MCF 10A (cell line): ENCODE measurements at regions of chr13 and their contacts with region 1.

Region 1: GRCh38 chr13:95494082-95494681 is 58.3 kb upstream of the CLDN10 start:
- DNase-seq: peak; percentile 93
- H3K4me3 Mint-ChIP-seq: no peak overlapping the region
- H3K27ac Mint-ChIP-seq: no peak overlapping the region
- H3K4me1 Mint-ChIP-seq: peaks cover 6% of the 10 kb centered on the region
- H3K27me3 Mint-ChIP-seq: no peaks in the 10 kb centered on the region
- CTCF ChIP-seq: peak; percentile 71

Region 2: DNA sequence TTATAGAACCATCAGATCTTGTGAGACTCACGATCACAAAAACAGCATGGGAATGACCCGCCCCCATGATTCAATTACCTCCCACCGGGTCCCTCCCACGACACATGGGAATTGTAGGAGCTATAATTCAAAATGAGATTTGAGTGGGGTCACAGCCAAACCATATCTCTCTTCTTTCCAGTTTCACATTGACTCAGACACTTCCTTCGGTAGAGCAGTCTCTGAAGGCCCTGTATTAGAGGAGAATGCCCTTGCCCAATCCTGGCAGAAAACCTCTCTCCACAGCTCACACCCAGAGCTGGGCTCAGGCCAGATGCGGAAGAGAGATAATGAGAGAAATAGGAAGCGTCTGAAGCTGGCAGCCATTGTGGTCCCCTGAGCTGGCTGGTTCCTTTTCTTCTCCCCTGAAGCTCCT is 14.0 kb before region 1 on chr13:
- CTCF ChIA-PET with region 1: interaction called, 10 read pairs
- POLR2A ChIA-PET with region 1: interaction called, 4 read pairs
- intact Hi-C with region 1: no loop called
- DNase-seq: peak; percentile 17
- H3K4me3 Mint-ChIP-seq: no peak overlapping the region
- H3K27ac Mint-ChIP-seq: no peak overlapping the region
- H3K4me1 Mint-ChIP-seq: peaks cover 23% of the 10 kb centered on the region
- H3K27me3 Mint-ChIP-seq: no peaks in the 10 kb centered on the region
- CTCF ChIP-seq: no peak

Region 3: DNA sequence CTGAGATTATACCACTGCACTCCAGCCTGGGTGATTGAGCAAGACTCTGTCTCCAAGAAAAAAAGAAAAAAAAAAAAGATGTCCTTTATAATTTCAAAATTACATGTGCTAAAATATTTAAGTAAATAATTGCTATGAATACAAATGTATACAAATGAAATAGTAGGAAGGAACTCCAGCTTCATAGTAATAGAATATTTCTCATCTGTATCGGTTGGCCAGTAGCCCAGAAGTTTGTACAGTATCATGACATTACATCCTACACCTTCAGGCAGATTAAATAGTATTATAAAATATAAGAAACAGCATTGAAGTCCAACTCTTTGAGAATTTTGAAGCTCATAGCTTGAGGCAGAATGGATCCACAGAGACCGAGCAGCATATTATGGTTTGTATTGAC is 21.8 kb after region 1 on chr13:
- CTCF ChIA-PET with region 1: interaction called, 36 read pairs
- POLR2A ChIA-PET with region 1: no interaction called
- intact Hi-C with region 1: no loop called
- DNase-seq: peak; percentile 83
- H3K4me3 Mint-ChIP-seq: no peak overlapping the region
- H3K27ac Mint-ChIP-seq: no peak overlapping the region
- H3K4me1 Mint-ChIP-seq: no peaks in the 10 kb centered on the region
- H3K27me3 Mint-ChIP-seq: no peaks in the 10 kb centered on the region
- CTCF ChIP-seq: no peak

Region 4: DNA sequence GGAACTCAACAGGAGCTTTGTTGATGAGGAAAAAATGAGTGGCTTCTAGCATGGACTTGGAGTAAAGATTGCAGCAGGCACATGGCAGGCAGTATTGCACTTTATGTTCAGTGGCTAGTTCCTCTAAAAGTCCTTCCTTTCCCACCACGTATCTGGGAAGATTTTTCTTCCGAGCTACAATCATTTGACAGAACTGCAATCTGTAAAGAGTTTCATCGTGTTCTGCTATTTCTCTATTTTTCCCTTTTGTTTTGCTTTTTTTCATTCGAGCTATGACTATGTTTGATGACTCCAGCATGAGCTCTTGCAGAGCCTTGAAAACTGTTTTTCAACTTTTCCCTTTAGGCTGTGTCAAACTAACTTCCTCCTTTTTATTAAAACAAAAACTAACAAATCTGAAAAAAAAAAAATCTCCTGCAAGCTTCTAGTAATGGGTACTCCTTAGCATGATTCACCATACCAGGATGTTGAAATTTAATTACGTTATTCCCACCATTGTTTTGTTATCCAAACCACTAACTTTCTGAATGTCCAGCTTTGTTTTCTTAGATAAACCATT is 70.6 kb after region 1 on chr13:
- CTCF ChIA-PET with region 1: interaction called, 14 read pairs
- POLR2A ChIA-PET with region 1: interaction called, 5 read pairs
- intact Hi-C with region 1: loop called (anchors 1 kb)
- DNase-seq: peak; percentile 92
- H3K4me3 Mint-ChIP-seq: peak overlapping the region; percentile 56
- H3K27ac Mint-ChIP-seq: peak overlapping the region; percentile 17
- H3K4me1 Mint-ChIP-seq: peaks cover 26% of the 10 kb centered on the region
- H3K27me3 Mint-ChIP-seq: no peaks in the 10 kb centered on the region
- CTCF ChIP-seq: no peak

Region 5: DNA sequence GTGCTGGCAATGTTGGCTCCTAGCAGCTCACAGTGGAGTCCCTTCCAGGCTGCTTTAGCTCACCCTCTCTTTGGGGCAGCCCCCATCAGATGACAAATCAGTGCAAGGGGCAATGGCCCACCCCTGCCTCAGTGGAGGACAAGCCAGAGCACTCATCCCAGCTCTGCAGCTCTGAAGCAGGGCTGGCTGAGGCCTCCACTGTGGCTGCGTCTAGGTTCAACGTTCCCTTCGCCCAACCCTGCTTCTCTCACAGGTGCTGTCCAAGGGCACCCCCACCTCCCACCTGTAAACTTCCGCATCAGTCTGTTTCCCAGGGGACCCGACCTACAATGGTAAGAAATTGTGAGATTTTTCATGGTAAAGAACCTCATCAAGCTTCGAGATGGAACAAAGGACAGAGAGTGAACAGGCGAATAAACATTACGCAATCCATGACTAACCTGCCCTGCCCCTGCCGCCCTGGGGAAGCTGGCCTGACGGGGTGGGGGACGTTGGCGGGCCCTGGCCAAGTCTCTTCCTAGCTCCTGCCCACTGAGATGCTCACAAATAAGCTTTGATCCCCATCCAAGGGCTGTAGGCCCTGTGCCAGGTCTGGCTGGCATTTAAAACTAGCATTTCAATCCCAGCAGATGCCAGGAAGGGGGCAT is 109.8 kb after region 1 on chr13:
- CTCF ChIA-PET with region 1: interaction called, 8 read pairs
- POLR2A ChIA-PET with region 1: no interaction called
- intact Hi-C with region 1: loop called (anchors 1 kb)
- DNase-seq: peak; percentile 97
- H3K4me3 Mint-ChIP-seq: peak overlapping the region; percentile 26
- H3K27ac Mint-ChIP-seq: peak overlapping the region; percentile 85
- H3K4me1 Mint-ChIP-seq: peaks cover 56% of the 10 kb centered on the region
- H3K27me3 Mint-ChIP-seq: no peaks in the 10 kb centered on the region
- CTCF ChIP-seq: no peak

Region 6: GRCh38 chr13:95660981-95661581 is 166.9 kb after region 1 on chr13:
- CTCF ChIA-PET with region 1: interaction called, 7 read pairs
- POLR2A ChIA-PET with region 1: no interaction called
- intact Hi-C with region 1: loop called (anchors 1 kb)
- DNase-seq: peak; percentile 88
- H3K4me3 Mint-ChIP-seq: no peak overlapping the region
- H3K27ac Mint-ChIP-seq: no peak overlapping the region
- H3K4me1 Mint-ChIP-seq: no peaks in the 10 kb centered on the region
- H3K27me3 Mint-ChIP-seq: no peaks in the 10 kb centered on the region
- CTCF ChIP-seq: peak; percentile 59